ENCODE measurements at regions of chr1 and their contacts with region 1.

Region 1: DNA sequence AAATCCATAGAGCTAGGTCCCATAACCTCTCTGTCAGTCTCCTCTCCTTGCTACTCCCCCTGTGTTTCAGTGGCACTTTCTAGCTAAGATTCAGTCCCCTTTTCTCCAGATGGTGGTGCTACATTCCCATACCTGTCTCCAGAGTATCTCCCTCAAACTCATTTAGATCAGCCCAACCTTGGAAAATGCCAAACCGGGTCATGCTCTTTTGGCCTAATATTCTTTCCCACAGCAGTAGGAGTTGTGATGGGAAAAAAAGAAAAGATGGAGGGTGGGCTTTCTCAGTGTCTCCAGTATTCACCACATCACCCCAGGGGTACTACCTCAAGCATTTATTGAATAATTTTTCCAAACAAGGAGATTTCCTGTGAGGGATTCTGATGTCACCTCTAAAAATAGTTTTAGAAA is 3.2 kb upstream of the RXFP4 start:
- DNase-seq: no peak
- ATAC-seq: peak; percentile 4 to 14

Region 2: DNA sequence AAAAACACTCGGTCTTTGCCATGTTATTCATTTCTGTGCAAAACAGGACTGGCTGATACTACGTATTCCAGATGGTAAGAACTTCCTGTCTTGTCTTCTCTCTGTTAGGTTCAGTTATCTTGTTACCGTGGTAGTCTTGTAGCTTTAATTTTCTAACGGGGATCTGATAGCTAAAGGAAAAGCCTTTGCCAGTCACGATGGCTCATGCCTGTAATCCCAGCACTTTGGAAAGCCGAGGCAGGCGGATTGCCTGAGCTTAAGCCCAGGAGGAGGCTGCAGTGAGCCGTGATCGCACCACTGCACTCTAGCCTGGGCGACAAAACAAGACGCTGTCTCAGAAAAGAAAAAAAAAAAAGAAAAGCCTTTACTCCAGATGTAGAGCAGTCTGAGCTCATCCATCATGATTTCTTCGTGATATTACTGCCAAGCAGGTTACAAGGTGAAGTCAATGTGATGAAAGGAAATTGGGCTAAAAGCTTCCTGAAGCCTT is 339.3 kb before region 1 on chr1:
- intact Hi-C with region 1: no loop called
- DNase-seq: peak; percentile 40
- ATAC-seq: peak; percentile 68 to 87

Region 3: DNA sequence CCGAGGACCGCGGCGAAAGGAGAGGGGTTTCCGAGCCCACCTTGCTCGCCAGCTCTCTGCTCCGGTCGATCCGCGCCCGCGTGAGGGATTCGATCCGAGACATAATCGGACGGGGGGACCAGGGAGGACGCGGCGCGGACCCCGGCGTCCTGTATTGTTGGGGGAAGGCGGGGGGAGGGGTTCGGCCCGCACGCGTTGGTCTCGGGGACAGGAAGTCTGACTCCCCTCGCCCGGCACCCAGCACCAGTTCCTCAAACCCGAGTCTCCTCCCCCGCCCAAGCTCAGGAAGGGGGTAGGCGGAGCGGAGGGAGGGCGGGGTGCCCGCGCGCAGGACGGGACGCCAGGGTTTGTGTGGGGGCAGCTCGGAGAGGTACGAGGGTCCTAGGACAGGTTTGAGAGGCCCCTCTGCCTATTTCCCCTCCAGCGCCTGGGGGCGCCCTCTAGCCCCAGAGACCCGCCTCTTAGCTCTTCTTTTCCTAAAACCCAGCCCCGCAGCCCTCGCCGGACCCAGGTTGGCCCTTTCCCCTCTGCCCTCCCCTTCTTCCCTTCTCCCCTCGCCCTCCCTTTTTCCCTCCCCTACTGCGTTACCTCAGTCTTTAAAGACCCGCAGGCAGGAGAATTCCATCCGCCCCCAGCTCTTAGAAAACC is 40.2 kb after region 1 on chr1 and contains the start of gene ARHGEF2:
- intact Hi-C with region 1: loop called in 1 of 2 experiments (anchors 5 kb)
- DNase-seq: peak; percentile 89
- ATAC-seq: peak; percentile 70 to 80
- total RNA-seq, gene ARHGEF2: 63.4 to 70.8 TPM

Region 4: DNA sequence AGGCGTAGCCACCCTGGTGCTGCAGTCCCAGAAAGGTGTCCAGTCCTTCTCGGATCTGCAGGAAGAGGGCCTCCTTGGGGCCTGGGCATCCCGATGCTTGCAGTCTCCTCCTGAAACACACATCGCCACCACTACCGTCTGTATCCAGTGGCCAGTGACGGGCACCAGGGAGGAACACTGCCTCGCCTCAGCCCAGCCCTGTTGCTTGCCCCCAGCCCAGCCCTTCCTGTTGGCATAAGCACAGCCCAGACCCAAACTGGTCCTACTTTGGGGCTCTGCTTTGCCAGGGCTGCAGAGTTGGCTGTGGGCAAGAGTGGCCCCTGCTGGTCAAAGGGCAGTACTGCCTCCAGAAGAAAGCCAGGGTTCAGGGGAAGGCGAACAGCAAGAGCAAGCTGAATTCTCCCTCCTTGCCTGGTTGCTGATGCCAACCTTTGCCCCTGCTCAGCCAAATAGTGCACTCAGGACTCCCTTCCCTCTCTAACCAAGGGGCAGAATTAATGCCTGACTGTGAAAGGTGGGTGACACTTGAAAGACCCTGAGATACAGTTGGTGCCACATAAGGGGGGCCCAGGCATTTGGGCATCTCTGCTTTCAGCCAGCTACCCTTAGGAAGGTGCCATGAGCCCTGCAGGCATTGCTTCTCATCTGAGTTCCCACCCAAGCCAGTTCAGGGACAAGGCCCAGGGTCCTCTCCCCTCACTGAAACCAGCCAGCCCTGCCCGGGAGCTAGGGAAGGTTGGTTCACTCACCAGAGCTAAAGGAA is 51.2 kb after region 1 on chr1:
- intact Hi-C with region 1: loop called (anchors 2 kb)
- DNase-seq: peak; percentile 83
- ATAC-seq: peak; percentile 93 to 94

Region 5: GRCh38 chr1:156781585-156782186 is 843.5 kb after region 1 on chr1:
- intact Hi-C with region 1: no loop called
- DNase-seq: no peak
- ATAC-seq: peak in 1 of 2 donors; percentile 79

Measured in left cardiac atrium (tissue), 4 donors.